Heart left ventricle (tissue), 16 donors: ENCODE measurements at regions of chr15 and their contacts with region 1.

Region 1: GRCh38 chr15:58731756-58732535 is 17.6 kb downstream of the ADAM10 start:
- DNase-seq: no peak
- ATAC-seq: peak; percentile 37 to 88 (median 65)
- H3K4me3 ChIP-seq: no peak overlapping the region
- H3K27ac ChIP-seq: peak overlapping the region in 6 of 12 donors; percentile 6 to 72 (median 38)
- H3K4me1 ChIP-seq: peaks cover 3 to 82% (median 38%) of the 10 kb centered on the region in 12 donors
- H3K27me3 ChIP-seq: no peaks in the 10 kb centered on the region
- CTCF ChIP-seq: no peak
- POLR2A ChIP-seq: no peak

Region 2: GRCh38 chr15:58521293-58521991 is 210.5 kb before region 1 on chr15:
- intact Hi-C with region 1: loop called in 1 of 10 experiments (anchors 10 kb)
- DNase-seq: peak in 3 of 5 donors; percentile 44 to 78 (median 66)
- ATAC-seq: peak in 3 of 4 donors; percentile 31 to 55 (median 35)
- H3K4me3 ChIP-seq: peak overlapping the region in 1 of 12 donors; percentile 4
- H3K27ac ChIP-seq: peak overlapping the region in 6 of 12 donors; percentile 5 to 82 (median 19)
- H3K4me1 ChIP-seq: peaks cover 3 to 94% (median 33%) of the 10 kb centered on the region in 12 donors
- H3K27me3 ChIP-seq: no peaks in the 10 kb centered on the region
- CTCF ChIP-seq: no peak
- POLR2A ChIP-seq: no peak

Region 3: GRCh38 chr15:58684036-58684710 is 47.8 kb before region 1 on chr15:
- intact Hi-C with region 1: loop called in 1 of 10 experiments (anchors 10 kb)
- DNase-seq: no peak
- ATAC-seq: no peak
- H3K4me3 ChIP-seq: no peak overlapping the region
- H3K27ac ChIP-seq: no peak overlapping the region
- H3K4me1 ChIP-seq: peaks cover 0 to 26% (median 14%) of the 10 kb centered on the region in 12 donors
- H3K27me3 ChIP-seq: no peaks in the 10 kb centered on the region
- CTCF ChIP-seq: no peak
- POLR2A ChIP-seq: no peak

Region 4: DNA sequence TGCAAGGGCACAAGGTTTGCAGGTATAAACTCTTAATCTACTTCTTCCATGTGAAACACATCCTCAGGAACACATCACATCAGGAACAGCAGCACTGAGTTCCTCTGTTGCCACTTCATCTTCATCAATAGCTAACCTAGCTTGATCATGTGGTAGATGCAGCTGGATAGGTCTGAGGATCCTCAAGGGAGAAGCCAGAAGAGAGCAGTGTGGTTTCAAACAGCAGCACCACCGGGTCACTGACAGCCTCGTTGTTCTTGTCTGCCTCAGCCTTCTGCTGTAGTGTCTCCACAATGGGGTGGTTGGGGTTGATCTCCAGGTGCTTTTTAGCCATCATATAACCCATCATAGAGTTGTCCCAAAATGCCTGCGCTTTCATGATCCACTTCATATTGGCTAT is 41.2 kb before region 1 on chr15:
- intact Hi-C with region 1: loop called in 2 of 10 experiments (anchors 5 to 10 kb)
- DNase-seq: no peak
- ATAC-seq: peak in 2 of 4 donors; percentile 22 to 38
- H3K4me3 ChIP-seq: no peak overlapping the region
- H3K27ac ChIP-seq: no peak overlapping the region
- H3K4me1 ChIP-seq: peaks cover 0 to 34% (median 17%) of the 10 kb centered on the region in 12 donors
- H3K27me3 ChIP-seq: no peaks in the 10 kb centered on the region
- CTCF ChIP-seq: no peak
- POLR2A ChIP-seq: no peak

Region 5: DNA sequence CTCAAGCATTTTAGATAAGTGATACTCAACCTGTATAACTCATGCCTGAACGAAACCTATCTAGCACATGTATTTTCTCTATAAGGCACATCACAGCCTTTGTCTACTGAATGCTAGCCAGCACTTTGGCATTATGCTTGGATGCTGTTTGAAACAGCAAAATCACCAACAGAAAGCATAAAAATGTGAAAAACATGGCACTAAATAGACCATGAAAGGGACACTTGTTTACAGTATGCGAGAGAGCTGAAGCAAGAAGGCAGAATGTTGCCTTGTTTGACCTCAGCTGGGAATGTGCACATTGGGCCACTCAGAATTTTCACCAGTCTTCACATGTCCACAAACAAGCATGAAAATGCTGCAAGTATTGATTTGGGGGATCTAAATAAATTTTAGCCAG is 98.6 kb after region 1 on chr15:
- intact Hi-C with region 1: no loop called
- DNase-seq: no peak
- ATAC-seq: no peak
- H3K4me3 ChIP-seq: no peak overlapping the region
- H3K27ac ChIP-seq: no peak overlapping the region
- H3K4me1 ChIP-seq: peaks cover 0 to 9% (median 0%) of the 10 kb centered on the region in 12 donors
- H3K27me3 ChIP-seq: no peaks in the 10 kb centered on the region
- CTCF ChIP-seq: no peak
- POLR2A ChIP-seq: no peak